ENCODE measurements at regions of chr1 and their contacts with region 1.

Region 1: DNA sequence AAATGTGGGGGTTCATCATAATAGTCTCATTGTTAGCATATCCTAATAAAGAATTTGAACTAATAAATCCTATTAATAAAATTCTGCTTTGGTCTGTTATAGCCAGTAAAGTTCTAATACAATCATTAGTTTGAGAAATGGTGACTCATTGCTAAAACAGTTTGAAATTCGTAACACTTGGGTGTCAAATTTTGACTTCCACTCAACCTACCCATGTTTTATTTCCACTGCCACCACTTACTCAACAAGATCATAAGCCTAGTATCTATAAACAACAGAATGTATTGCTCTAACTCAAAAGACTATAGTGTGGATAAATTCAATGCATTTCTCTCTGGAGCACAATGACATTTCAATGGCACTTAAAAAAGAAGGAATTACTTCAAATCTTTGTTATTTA is 29.1 kb downstream of the LGALS8 start:
- DNase-seq: no peak
- ATAC-seq: no peak
- H3K4me3 Mint-ChIP-seq: no peak overlapping the region
- H3K27ac Mint-ChIP-seq: no peak overlapping the region
- H3K4me1 Mint-ChIP-seq: no peaks in the 10 kb centered on the region
- H3K27me3 Mint-ChIP-seq: no peaks in the 10 kb centered on the region
- CTCF ChIP-seq: no peak

Region 2: GRCh38 chr1:236589531-236589930 is 36.6 kb after region 1 on chr1:
- CTCF ChIA-PET with region 1: no interaction called
- POLR2A ChIA-PET with region 1: no interaction called
- intact Hi-C with region 1: loop called (anchors 5 kb)
- DNase-seq: no peak
- ATAC-seq: no peak
- H3K4me3 Mint-ChIP-seq: no peak overlapping the region
- H3K27ac Mint-ChIP-seq: no peak overlapping the region
- H3K4me1 Mint-ChIP-seq: no peaks in the 10 kb centered on the region
- H3K27me3 Mint-ChIP-seq: no peaks in the 10 kb centered on the region
- CTCF ChIP-seq: no peak